BJ (cell line): ENCODE measurements at regions of chr5 and their contacts with region 1.

Region 1: GRCh38 chr5:148374692-148375360 is 8.9 kb upstream of the FBXO38 start:
- DNase-seq: no peak
- H3K4me3 ChIP-seq: no peak overlapping the region
- H3K27me3 ChIP-seq: no peaks in the 10 kb centered on the region
- CTCF ChIP-seq: peak; percentile 83

Region 2: DNA sequence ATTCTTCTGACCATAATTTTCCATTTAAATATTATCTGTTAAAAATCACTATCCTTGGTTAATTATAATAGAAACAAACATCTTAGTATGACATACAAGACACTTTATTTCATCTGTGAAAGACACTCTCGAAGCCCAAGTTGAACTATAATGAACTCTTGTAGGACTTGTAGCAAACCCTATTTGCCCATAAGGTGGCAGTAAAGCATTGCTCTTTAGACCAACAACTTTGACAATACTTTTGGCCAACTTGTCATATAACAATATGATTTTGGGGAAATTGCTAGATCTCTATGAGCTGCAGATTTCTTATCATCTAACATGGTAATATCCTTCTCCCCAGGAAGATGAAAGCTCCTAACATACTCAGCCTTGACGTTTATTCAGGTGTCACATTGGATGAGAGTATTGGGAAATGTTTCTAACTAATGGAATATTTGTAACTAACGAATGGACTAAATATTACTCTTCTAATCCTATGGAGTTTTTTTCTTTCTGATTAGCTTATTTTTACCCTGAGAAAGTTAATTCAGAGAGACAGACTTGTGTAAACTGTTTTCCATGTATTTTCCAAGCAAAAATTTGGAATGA is 195.5 kb before region 1 on chr5:
- CTCF ChIA-PET with region 1: interaction called, 15 read pairs
- POLR2A ChIA-PET with region 1: no interaction called
- DNase-seq: peak; percentile 3
- H3K4me3 ChIP-seq: no peak overlapping the region
- H3K27me3 ChIP-seq: no peaks in the 10 kb centered on the region
- CTCF ChIP-seq: peak; percentile 67